PC-3 (cell line): ENCODE measurements at regions of chr16 and their contacts with region 1.

Region 1: DNA sequence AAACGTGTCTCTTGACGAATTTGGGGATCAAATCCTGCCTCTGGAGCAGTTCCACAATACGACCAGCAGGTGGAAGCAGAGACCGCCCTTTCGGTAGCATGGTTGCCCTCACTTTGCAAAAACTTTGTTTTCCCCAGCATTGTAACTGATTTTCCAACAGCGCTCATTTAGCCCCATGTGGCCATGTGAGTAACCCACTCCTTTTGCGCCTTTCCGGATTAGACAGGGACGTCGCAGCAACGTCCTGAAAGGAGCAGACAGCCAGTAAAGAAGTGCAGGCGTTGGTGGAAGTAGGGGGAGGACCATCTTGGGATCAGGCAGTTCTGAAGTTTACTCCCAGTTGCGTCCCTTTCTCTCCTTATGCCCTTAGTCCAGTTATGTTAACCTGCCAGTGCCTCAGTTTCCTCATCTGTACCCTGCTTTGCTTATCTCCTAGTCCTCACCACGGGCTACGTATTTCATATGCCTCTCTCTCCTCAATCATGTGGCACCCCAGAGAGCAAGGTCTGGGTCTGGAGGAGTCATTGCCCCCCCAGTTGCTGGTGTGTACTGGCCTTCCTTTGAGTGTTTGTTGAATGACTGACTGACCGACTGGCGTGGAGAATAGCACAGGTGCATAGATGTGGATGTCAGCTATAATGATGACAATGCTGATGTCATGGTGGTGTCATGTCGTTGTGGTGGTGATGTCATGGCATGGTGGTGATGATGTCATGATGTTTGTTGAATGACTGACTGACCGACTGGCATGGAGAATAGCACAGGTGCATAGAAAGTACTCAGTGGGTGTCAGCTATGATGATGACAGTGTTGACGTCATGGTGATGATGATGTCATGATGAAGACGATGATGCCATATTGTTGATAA is 22.3 kb downstream of the TMEM114 start:
- DNase-seq: peak; percentile 90
- ATAC-seq: peak; percentile 90
- H3K4me3 ChIP-seq: no peak overlapping the region
- H3K27ac ChIP-seq: no peak overlapping the region
- H3K4me1 ChIP-seq: no peaks in the 10 kb centered on the region
- H3K27me3 ChIP-seq: peaks cover 17% of the 10 kb centered on the region
- CTCF ChIP-seq: peak; percentile 94

Region 2: DNA sequence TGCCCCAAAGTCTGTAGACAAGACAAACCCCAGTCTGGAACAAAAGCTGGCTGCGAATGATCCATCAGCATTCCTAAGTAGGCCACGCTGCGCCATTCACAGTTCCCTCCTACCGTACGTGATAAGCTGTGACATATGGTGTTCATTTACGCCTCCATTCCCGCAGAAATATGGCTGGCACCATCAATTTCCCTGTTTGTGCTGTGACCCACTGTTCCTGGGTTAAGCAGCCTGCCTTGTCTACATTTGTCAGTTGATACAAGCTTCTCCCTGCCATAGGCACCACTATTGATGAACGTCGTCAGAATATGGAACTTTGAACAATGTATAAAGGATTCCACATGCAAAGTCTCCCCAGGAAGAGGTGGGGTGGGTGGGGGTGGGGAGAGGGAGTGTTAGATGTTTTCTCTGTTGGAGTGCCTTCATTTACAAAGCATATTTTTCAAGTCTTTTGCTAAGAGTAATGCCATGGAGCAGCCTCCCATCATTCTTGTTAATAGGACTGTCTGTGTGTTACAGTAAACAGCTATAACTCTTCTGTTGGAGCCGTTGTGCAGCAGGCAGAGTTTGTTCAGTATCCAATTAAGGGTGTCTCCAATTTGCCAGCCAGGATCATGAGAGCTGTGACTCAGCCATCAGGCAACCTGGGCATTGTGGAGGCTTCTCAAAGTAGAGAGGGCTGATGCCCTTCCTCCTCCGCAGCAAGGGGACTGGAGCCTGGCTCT is 272.3 kb before region 1 on chr16:
- CTCF ChIA-PET with region 1: no interaction called
- POLR2A ChIA-PET with region 1: no interaction called
- intact Hi-C with region 1: no loop called
- DNase-seq: no peak
- ATAC-seq: no peak
- H3K4me3 ChIP-seq: no peak overlapping the region
- H3K27ac ChIP-seq: no peak overlapping the region
- H3K4me1 ChIP-seq: no peaks in the 10 kb centered on the region
- H3K27me3 ChIP-seq: no peaks in the 10 kb centered on the region
- CTCF ChIP-seq: no peak

Region 3: DNA sequence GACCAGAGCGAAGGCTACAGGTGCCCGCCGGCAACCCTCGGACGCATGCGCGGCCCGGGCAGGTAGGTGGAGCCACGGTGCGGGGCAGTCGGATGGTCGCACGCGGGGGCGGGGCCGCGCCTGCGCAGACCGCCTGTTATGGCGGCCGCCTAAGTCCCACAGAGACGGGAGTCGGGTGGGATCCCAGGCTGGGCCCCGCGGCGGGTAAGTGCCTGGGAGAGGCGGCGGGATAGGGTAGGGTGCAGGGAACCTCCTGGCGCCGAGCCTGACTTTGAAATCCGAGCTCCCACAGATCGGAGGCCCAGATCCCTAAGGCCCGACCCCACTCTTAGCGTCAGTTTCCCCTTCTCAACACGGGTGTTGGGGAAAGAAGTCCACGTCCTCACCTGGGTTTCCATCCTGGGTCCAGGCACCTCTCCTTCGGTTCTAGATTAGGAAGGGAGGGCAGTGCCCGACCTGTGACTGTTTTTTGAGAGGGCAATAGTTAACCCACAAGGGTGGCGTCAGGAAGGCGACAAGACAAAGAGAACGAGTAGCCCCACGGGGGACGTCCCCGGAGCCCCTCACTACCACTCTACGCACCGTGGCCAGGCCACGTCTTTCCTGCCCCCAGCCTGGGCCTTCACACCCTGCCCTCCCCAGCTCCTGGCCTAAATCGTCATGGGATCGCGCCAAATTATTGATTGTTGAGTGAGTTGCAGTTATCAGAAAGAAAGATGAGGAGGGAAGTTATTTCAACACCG is 53.8 kb after region 1 on chr16 and contains the start of gene METTL22:
- CTCF ChIA-PET with region 1: no interaction called
- POLR2A ChIA-PET with region 1: no interaction called
- intact Hi-C with region 1: loop called (anchors 5 kb)
- DNase-seq: peak; percentile 82
- ATAC-seq: peak; percentile 97
- H3K4me3 ChIP-seq: peak within 1 kb of the TSS; percentile 80
- H3K27ac ChIP-seq: no peak within 1 kb of the TSS
- H3K4me1 ChIP-seq: peaks cover 8% of the 10 kb centered on the region
- H3K27me3 ChIP-seq: no peaks in the 10 kb centered on the region
- CTCF ChIP-seq: no peak
- total RNA-seq, gene METTL22: 14.6 and 17.6 TPM in 2 replicates